HEK293T (cell line): ENCODE measurements at regions of chr19 and their contacts with region 1.

Region 1: GRCh38 chr19:11380653-11381534 is 3.2 kb downstream of the EPOR start:
- DNase-seq: peak; percentile 90

Region 2: DNA sequence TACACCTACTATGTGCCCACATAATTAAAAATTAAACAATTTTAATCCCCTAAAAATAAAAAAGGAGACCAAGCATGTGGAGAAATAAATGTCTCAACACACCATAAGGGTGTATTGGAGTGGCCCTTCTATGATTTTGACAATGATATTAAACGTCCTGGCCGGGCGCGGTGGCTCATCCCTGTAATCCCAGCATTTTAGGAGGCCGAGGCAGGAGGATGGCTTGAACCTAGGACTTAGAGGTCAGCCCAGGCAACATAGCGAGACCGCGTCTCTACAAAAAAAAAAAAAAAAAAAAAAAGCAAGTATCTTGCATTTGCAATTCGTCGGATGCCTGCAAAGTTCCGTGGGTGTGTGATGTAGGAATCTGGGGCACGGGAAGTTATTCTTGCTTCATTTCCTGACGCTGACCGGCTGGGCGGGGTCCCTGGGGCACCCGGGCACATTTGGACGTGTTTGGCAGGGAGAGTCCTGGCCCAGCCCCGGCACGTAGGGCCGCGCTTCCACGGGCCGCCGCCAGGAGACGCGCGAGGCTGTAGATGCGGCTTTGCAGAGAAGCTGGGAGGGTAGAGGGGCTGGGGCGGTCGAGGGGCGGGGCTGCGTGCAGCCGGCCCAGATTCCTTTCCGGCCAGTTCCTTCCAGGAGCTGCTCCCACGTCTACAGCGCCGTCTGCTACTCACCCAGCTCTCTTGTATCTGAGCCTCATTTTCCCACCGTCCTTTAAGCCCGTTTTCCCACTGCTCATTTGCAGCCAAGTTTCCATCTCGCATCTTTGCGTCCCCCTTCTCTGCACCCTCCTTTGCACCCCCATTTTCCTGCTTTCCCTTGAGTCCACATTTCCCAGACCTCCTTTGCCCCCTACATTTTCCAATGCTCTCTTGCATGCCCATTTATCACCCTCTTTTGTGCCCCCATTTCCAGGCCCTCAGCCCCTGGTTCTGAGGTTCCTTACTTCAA is 87.2 kb before region 1 on chr19:
- CTCF ChIA-PET with region 1: interaction called, 12 read pairs
- POLR2A ChIA-PET with region 1: interaction called, 13 read pairs
- DNase-seq: peak; percentile 94

Region 3: GRCh38 chr19:11346092-11346940 is 34.6 kb before region 1 on chr19 and contains the starts of genes CCDC159 and TMEM205:
- CTCF ChIA-PET with region 1: interaction called, 7 read pairs
- POLR2A ChIA-PET with region 1: interaction called, 20 read pairs
- DNase-seq: peak; percentile 91

Region 4: DNA sequence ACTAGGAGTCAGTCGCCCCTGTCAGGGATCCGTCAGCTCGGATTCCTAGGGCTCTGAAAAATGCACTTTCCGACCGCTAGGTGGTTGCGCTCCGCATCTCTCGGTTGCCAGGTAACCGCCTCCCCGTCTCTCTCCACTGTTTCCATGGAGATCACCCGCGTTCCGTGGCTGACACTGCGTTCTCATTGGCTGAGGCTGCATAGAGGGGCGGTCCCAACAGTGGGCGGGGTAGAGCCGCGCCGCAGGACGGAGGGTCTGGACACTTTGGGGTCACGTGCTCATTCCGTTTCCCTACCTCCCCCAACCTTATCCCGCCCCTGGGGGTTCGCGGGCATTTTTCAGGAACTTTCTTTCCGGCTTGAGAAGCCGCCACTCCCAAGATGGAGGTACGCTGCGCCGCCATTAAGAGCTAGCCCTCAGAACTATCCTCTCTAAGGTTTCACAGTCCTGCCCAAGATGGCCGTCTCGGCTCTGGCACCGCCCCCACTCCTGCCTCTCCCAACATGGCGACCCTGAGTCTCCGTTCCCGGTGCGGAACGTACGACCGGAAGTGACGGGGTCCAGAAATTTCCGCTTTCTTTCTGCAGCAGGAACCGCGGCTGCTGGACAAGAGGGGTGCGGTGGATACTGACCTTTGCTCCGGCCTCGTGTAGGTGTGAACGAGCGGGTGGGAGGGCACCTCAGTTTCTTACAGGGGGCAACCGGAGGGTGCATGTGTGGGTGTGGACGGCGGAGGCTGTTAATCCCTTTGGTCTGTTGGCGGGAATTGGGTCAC is 54.4 kb after region 1 on chr19 and contains the starts of genes ODAD3 and PRKCSH:
- CTCF ChIA-PET with region 1: interaction called, 8 read pairs
- POLR2A ChIA-PET with region 1: interaction called, 12 read pairs
- DNase-seq: peak; percentile 99

Region 5: GRCh38 chr19:11446652-11447301 is 65.9 kb after region 1 on chr19:
- CTCF ChIA-PET with region 1: interaction called, 12 read pairs
- POLR2A ChIA-PET with region 1: interaction called, 5 read pairs
- DNase-seq: peak; percentile 83

Region 6: GRCh38 chr19:11482384-11483050 is 101.6 kb after region 1 on chr19:
- CTCF ChIA-PET with region 1: interaction called, 14 read pairs
- POLR2A ChIA-PET with region 1: interaction called, 9 read pairs
- DNase-seq: peak; percentile 96